ENCODE measurements at regions of chr12 and their contacts with region 1.

Region 1: DNA sequence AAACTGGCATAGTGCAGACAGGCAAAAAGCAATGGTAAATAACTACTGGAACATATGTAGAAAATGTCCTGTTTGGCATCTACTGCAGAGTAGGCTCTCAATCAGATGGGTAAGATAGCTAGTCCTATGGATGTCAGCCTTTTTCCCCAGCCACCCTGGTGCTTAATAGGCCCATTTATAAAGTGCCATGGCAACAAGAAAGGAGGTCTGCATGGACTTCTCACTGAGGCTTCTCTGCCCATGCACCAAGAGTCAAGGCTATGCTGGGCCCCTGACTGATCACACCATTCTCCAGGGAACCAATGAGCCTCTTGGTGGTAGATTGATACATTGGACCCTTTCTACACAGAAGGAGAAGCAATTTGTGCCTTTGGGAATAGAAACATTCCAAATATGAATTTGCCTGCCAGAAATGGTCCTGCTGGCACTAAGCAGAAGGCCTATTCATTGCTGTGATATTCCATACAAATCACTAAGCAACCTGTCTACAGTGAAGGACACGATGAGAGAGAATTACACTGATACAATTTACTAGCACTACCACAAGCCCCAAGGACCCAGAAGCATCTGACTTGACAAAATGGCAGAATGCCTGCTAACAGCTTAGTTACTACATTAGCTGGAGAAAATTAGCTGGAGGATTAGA is 43.8 kb downstream of the RESF1 start:
- DNase-seq: no peak
- H3K4me3 ChIP-seq: no peak overlapping the region
- H3K4me3 Mint-ChIP-seq: no peak overlapping the region
- H3K27ac Mint-ChIP-seq: no peak overlapping the region
- H3K4me1 ChIP-seq: no peaks in the 10 kb centered on the region
- H3K4me1 Mint-ChIP-seq: no peaks in the 10 kb centered on the region
- H3K27me3 ChIP-seq: no peaks in the 10 kb centered on the region
- H3K27me3 Mint-ChIP-seq: no peaks in the 10 kb centered on the region
- CTCF ChIP-seq: no peak

Region 2: GRCh38 chr12:31804185-31804504 is 198.8 kb before region 1 on chr12:
- CTCF ChIA-PET with region 1: no interaction called
- POLR2A ChIA-PET with region 1: no interaction called
- intact Hi-C with region 1: no loop called
- DNase-seq: no peak
- H3K4me3 ChIP-seq: no peak overlapping the region
- H3K4me3 Mint-ChIP-seq: no peak overlapping the region
- H3K27ac Mint-ChIP-seq: peak overlapping the region; percentile 54
- H3K4me1 ChIP-seq: peaks cover 20% of the 10 kb centered on the region
- H3K4me1 Mint-ChIP-seq: peaks cover 35% of the 10 kb centered on the region
- H3K27me3 ChIP-seq: no peaks in the 10 kb centered on the region
- H3K27me3 Mint-ChIP-seq: no peaks in the 10 kb centered on the region
- CTCF ChIP-seq: no peak

Region 3: DNA sequence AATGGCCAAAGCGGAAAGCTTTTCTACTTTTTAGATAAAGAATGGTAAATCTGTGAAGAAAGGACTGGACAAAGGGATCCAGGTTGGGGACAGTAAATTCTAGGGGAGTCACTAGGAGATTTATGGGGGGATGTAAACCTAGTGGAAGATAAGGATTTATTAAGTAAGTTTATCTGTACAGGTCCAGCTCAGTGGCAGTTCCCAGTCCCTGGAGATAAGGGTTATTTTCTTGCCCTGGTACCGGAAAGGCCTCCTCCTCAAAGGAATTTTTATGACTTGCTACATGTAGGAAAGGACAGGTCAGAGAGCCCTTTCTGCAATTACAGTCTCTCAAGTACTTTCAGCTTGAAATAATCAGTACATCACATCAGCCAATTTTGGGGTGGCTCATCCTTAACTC is 31.1 kb after region 1 on chr12:
- CTCF ChIA-PET with region 1: no interaction called
- POLR2A ChIA-PET with region 1: no interaction called
- intact Hi-C with region 1: loop called (anchors 2 kb)
- DNase-seq: peak; percentile 74 to 90
- H3K4me3 ChIP-seq: no peak overlapping the region
- H3K4me3 Mint-ChIP-seq: peak overlapping the region; percentile 28
- H3K27ac Mint-ChIP-seq: peak overlapping the region; percentile 82
- H3K4me1 ChIP-seq: peaks cover 17% of the 10 kb centered on the region
- H3K4me1 Mint-ChIP-seq: peaks cover 32% of the 10 kb centered on the region
- H3K27me3 ChIP-seq: no peaks in the 10 kb centered on the region
- H3K27me3 Mint-ChIP-seq: no peaks in the 10 kb centered on the region
- CTCF ChIP-seq: no peak

Measured in Caco-2 (cell line).